Naive thymus-derived CD8-positive, alpha-beta T cell (primary cell): ENCODE measurements at regions of chr14 and their contacts with region 1.

Region 1: GRCh38 chr14:49867831-49868723 is 15.5 kb upstream of the NEMF start:
- DNase-seq: peak; percentile 87 to 99 (median 95)
- ATAC-seq: peak; percentile 85 to 90
- H3K4me3 Mint-ChIP-seq: peak overlapping the region; percentile 86 to 97 (median 92)
- H3K27ac Mint-ChIP-seq: peak overlapping the region; percentile 94 to 99 (median 98)
- H3K4me1 Mint-ChIP-seq: peaks cover 6 to 39% (median 19%) of the 10 kb centered on the region in 4 donors
- H3K27me3 Mint-ChIP-seq: no peaks in the 10 kb centered on the region

Region 2: DNA sequence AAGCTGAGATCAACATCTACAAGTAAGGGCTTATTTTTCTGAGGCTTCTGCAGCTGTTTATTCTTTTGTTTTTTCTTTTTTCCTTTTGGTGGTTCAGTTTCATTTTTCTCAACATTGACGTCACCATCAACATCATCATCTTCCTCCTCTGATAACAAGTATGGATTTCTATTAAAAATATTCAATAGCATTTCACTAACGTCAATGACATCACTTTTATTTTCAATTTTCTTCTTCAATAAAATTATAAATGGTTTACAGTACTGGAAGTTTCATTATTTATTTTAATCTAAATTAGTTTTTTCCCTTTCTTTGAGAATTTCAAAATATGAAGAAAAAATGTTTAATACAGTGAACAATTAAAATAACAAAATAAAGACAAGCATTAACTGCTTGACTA is 39.4 kb before region 1 on chr14:
- POLR2A ChIA-PET with region 1: no interaction called
- DNase-seq: no peak
- ATAC-seq: no peak
- H3K4me3 Mint-ChIP-seq: no peak overlapping the region
- H3K27ac Mint-ChIP-seq: peak overlapping the region in 1 of 10 donors; percentile 50
- H3K4me1 Mint-ChIP-seq: peaks cover 0 to 8% (median 6%) of the 10 kb centered on the region in 4 donors
- H3K27me3 Mint-ChIP-seq: no peaks in the 10 kb centered on the region

Region 3: GRCh38 chr14:49879683-49880204 is 11.7 kb after region 1 on chr14:
- POLR2A ChIA-PET with region 1: interaction called, 16 read pairs
- DNase-seq: peak in 8 of 10 donors; percentile 18 to 77 (median 50)
- ATAC-seq: peak; percentile 87 to 94
- H3K4me3 Mint-ChIP-seq: no peak overlapping the region
- H3K27ac Mint-ChIP-seq: peak overlapping the region in 7 of 10 donors; percentile 35 to 81 (median 51)
- H3K4me1 Mint-ChIP-seq: peaks cover 0 to 18% (median 13%) of the 10 kb centered on the region in 4 donors
- H3K27me3 Mint-ChIP-seq: no peaks in the 10 kb centered on the region

Region 4: GRCh38 chr14:49946320-49947141 is 78.5 kb after region 1 on chr14:
- POLR2A ChIA-PET with region 1: interaction called, 16 read pairs
- DNase-seq: peak in 6 of 10 donors; percentile 9 to 64 (median 26)
- ATAC-seq: peak; percentile 75 to 76
- H3K4me3 Mint-ChIP-seq: peak overlapping the region; percentile 6 to 82 (median 70)
- H3K27ac Mint-ChIP-seq: peak overlapping the region; percentile 87 to 99 (median 92)
- H3K4me1 Mint-ChIP-seq: peaks cover 42 to 77% (median 70%) of the 10 kb centered on the region in 4 donors
- H3K27me3 Mint-ChIP-seq: no peaks in the 10 kb centered on the region

Region 5: DNA sequence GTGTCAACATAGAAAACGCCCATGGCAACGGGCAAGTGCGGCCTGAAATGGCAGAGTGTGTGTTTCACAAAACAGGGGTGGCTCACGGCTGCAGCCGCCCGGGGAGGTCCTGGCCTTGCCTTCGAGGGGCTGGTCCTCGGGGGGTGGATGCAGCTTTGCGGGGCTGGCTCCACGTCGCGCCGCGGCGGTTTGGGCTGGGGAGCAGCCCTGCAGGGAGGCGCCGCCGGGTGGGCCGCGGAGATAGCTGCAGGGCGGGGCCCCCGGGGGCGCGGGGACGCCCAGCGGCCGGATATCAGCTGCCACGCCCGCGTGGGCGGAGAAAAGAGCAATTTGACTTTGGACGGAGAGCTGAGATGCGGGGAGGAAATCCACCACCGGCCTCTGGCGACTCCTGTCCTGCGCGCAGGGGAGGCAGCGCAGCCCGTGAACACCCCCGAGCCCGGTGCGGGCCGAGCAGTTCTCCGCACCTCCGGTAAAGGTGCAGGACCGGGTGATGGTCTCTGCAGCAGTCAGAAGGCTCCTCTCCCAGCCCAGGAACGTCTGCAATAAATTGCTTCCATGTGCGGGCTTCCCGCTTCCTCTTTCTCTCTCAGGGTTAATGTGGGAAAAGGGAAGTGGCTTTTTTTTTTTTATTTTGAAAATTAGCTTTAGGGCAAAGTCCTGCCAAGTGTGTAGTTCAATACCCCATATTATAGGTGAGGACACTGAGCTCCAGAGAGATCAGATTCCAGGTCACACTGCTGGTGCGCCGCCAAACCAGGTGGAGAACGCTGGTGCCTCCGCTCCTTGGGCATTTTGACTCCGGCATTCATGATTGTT is 135.3 kb after region 1 on chr14:
- POLR2A ChIA-PET with region 1: interaction called, 81 read pairs
- DNase-seq: peak; percentile 66 to 91 (median 76)
- ATAC-seq: peak; percentile 46 to 53
- H3K4me3 Mint-ChIP-seq: peak overlapping the region; percentile 77 to 94 (median 90)
- H3K27ac Mint-ChIP-seq: peak overlapping the region; percentile 96 to 99 (median 98)
- H3K4me1 Mint-ChIP-seq: peaks cover 34 to 62% (median 51%) of the 10 kb centered on the region in 4 donors
- H3K27me3 Mint-ChIP-seq: no peaks in the 10 kb centered on the region

Region 6: GRCh38 chr14:50085570-50086320 is 217.7 kb after region 1 on chr14:
- POLR2A ChIA-PET with region 1: interaction called, 35 read pairs
- DNase-seq: peak in 3 of 10 donors; percentile 26 to 49 (median 37)
- ATAC-seq: no peak
- H3K4me3 Mint-ChIP-seq: peak overlapping the region; percentile 15 to 82 (median 68)
- H3K27ac Mint-ChIP-seq: peak overlapping the region; percentile 79 to 97 (median 93)
- H3K4me1 Mint-ChIP-seq: peaks cover 39 to 94% (median 88%) of the 10 kb centered on the region in 4 donors
- H3K27me3 Mint-ChIP-seq: no peaks in the 10 kb centered on the region

Region 7: GRCh38 chr14:50099335-50099734 is 231.3 kb after region 1 on chr14:
- POLR2A ChIA-PET with region 1: interaction called, 71 read pairs
- DNase-seq: no peak
- ATAC-seq: peak in 1 of 2 donors; percentile 48
- H3K4me3 Mint-ChIP-seq: peak overlapping the region in 9 of 10 donors; percentile 17 to 79 (median 52)
- H3K27ac Mint-ChIP-seq: peak overlapping the region; percentile 36 to 95 (median 82)
- H3K4me1 Mint-ChIP-seq: peaks cover 35 to 82% (median 71%) of the 10 kb centered on the region in 4 donors
- H3K27me3 Mint-ChIP-seq: no peaks in the 10 kb centered on the region